ENCODE measurements at regions of chr13 and their contacts with region 1.

Region 1: DNA sequence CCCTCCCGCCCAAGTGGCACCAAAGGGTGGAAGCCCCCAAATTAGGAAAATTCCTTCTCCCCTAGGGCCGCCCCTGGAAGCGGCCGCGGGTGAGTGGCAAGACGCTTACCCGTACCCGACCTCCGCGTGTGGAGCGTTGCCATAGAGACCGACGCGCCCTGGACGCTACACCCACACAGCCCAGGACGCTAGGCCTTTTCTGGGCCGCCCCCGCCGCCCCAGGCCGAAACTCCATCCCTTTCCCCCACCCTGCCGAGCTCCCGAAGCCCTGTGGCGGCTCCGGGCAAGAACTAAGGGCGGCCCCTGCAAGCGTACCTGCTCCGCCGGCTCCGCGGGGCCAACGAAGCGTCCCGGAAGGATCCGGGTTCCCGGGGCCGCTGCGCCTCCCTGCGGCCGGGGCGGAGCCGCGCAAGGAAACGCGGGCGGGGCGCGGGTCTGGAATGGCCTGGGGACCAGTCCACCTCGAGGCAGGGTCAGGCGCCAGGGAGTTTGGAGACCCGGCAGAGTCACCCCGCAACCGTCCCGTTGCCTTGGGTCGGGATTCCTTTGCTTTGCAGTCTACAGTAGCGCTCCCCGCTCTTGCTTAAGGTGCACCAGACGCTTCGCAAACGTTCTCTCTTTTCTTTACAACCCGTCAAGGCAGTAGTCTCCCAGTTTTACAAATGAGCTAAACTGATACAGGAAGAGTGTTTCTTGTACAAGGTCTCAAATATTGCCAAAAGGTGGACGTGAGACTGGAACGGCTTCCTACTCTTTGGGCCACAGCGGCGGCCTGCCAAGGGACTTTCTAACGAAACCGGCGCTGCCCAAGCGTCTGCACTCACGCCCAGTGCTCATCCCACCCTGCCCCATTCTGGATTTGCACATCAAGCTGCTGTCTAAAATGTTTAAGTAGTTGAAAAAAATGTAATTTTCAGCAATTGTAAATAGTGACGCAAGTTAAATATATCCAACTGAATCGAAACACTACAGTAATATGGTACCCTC is at the start of gene NEK5:
- DNase-seq: peak; percentile 48 to 58 (median 55)
- H3K4me3 ChIP-seq: peak within 1 kb of the TSS; percentile 59 to 73
- H3K4me3 Mint-ChIP-seq: peak within 1 kb of the TSS; percentile 77 to 95 (median 86)
- H3K27ac ChIP-seq: no peak within 1 kb of the TSS
- H3K27ac Mint-ChIP-seq: peak within 1 kb of the TSS in 6 of 7 donors; percentile 3 to 50 (median 18)
- H3K4me1 ChIP-seq: peaks cover 19% of the 10 kb centered on the region
- H3K4me1 Mint-ChIP-seq: peaks cover 11 to 19% (median 13%) of the 10 kb centered on the region in 4 donors
- H3K27me3 ChIP-seq: peaks cover 4% of the 10 kb centered on the region
- H3K27me3 Mint-ChIP-seq: peaks cover 0 to 3% of the 10 kb centered on the region in 2 donors
- total RNA-seq, gene NEK5: not detected

Region 2: DNA sequence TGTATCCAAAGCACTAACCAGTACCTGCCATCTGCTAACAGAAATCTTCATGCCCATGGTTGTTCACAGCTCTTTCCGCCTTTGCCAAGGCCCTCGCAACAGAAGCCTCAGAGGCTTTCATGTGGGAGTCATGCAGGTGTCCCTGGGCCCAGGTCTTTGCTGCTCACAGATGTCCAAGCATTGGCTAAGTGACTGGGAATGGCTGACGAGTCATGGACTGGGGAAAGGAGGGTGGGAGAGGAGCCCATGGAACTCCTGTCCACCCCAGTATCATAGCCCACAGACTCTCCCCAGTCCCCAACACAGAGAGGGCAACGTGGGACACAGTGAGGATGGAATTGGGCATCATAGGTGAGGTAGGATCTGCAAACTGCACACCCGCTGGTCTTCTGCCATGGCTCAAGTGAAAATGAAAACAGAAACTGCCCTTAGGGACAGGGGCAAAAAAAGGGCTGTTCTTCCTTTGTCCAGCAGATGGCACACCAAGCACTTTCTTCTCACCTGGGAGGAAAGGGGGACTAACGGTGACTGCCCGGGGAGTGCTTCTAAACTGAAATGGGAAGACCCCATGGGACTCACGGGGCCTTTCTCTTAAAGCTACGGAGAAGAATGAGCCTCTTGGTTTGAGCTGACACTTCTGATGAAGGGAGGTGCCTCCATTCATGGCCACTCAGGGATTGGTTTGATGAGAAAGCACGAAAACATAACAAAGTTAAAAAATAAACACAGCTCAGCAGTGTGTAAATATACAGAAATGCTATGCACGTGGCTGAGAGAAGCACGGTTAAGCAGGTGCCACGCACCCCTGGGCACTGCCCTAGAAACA is 314.0 kb before region 1 on chr13:
- CTCF ChIA-PET with region 1: interaction called, 21 read pairs
- POLR2A ChIA-PET with region 1: interaction called, 3 read pairs
- intact Hi-C with region 1: loop called (anchors 1 kb)
- DNase-seq: peak; percentile 74 to 79 (median 77)
- H3K4me3 ChIP-seq: peak overlapping the region in 1 of 2 donors; percentile 12
- H3K4me3 Mint-ChIP-seq: peak overlapping the region; percentile 52 to 83 (median 70)
- H3K27ac ChIP-seq: peak overlapping the region; percentile 43
- H3K27ac Mint-ChIP-seq: peak overlapping the region; percentile 78 to 97 (median 90)
- H3K4me1 ChIP-seq: peaks cover 62% of the 10 kb centered on the region
- H3K4me1 Mint-ChIP-seq: peaks cover 47 to 85% (median 64%) of the 10 kb centered on the region in 4 donors
- H3K27me3 ChIP-seq: no peaks in the 10 kb centered on the region
- H3K27me3 Mint-ChIP-seq: no peaks in the 10 kb centered on the region

Region 3: GRCh38 chr13:51832471-51833152 is 296.4 kb before region 1 on chr13:
- CTCF ChIA-PET with region 1: interaction called, 6 read pairs
- POLR2A ChIA-PET with region 1: no interaction called
- intact Hi-C with region 1: loop called (anchors 5 kb)
- DNase-seq: peak; percentile 72 to 78 (median 73)
- H3K4me3 ChIP-seq: no peak overlapping the region
- H3K4me3 Mint-ChIP-seq: peak overlapping the region in 7 of 8 donors; percentile 6 to 67 (median 44)
- H3K27ac ChIP-seq: no peak overlapping the region
- H3K27ac Mint-ChIP-seq: peak overlapping the region; percentile 6 to 85 (median 66)
- H3K4me1 ChIP-seq: peaks cover 18% of the 10 kb centered on the region
- H3K4me1 Mint-ChIP-seq: peaks cover 16 to 43% (median 34%) of the 10 kb centered on the region in 4 donors
- H3K27me3 ChIP-seq: no peaks in the 10 kb centered on the region
- H3K27me3 Mint-ChIP-seq: no peaks in the 10 kb centered on the region

Region 4: GRCh38 chr13:51844862-51845573 is 284.0 kb before region 1 on chr13 and contains the start of gene TMEM272:
- CTCF ChIA-PET with region 1: interaction called, 26 read pairs
- POLR2A ChIA-PET with region 1: no interaction called
- intact Hi-C with region 1: loop called (anchors 1 kb)
- DNase-seq: peak in 4 of 5 donors; percentile 36 to 57 (median 48)
- H3K4me3 ChIP-seq: no peak within 1 kb of the TSS
- H3K4me3 Mint-ChIP-seq: peak within 1 kb of the TSS in 4 of 8 donors; percentile 9 to 70 (median 54)
- H3K27ac ChIP-seq: no peak within 1 kb of the TSS
- H3K27ac Mint-ChIP-seq: peak within 1 kb of the TSS in 2 of 7 donors; percentile 48 to 62
- H3K4me1 ChIP-seq: no peaks in the 10 kb centered on the region
- H3K4me1 Mint-ChIP-seq: peaks cover 4 to 10% (median 8%) of the 10 kb centered on the region in 4 donors
- H3K27me3 ChIP-seq: no peaks in the 10 kb centered on the region
- H3K27me3 Mint-ChIP-seq: peaks cover 2 to 3% of the 10 kb centered on the region in 2 donors
- total RNA-seq, gene TMEM272: 7.9 to 9.0 TPM

Region 5: GRCh38 chr13:51895906-51896888 is 232.8 kb before region 1 on chr13:
- CTCF ChIA-PET with region 1: interaction called, 59 read pairs
- POLR2A ChIA-PET with region 1: no interaction called
- intact Hi-C with region 1: loop called (anchors 1 kb)
- DNase-seq: peak in 4 of 5 donors; percentile 38 to 47 (median 42)
- H3K4me3 ChIP-seq: no peak overlapping the region
- H3K4me3 Mint-ChIP-seq: no peak overlapping the region
- H3K27ac ChIP-seq: no peak overlapping the region
- H3K27ac Mint-ChIP-seq: no peak overlapping the region
- H3K4me1 ChIP-seq: no peaks in the 10 kb centered on the region
- H3K4me1 Mint-ChIP-seq: peaks cover 0 to 4% (median 1%) of the 10 kb centered on the region in 4 donors
- H3K27me3 ChIP-seq: no peaks in the 10 kb centered on the region
- H3K27me3 Mint-ChIP-seq: peaks cover 1 to 17% of the 10 kb centered on the region in 2 donors

Region 6: DNA sequence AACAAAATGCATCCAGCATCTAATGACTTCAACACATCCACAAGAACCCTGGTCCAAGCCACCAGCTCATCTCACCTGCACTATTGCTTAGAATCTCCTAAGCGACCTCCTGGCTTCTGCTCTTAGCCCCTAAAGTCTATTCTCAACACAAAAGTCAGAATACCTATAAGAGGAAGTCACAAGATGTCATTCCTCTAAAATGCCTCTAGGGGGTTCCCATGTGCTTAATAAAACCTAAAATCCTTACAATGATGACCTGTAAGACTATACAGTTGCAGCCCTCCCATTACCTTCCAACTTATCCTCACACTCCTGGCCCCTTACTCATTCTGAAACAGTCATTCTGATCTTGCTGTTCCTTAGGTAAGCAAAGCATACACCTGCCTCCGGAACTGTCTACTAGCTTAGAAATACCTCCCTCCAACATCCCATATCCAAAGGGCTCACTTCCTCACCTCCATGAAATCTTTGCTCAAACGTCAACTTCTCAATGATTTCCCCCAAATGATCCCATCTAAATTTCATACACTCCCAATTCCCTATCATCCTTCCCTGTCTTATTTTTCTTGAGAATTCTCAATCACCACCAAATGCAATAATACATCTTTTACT is 127.8 kb before region 1 on chr13:
- CTCF ChIA-PET with region 1: interaction called, 49 read pairs
- POLR2A ChIA-PET with region 1: no interaction called
- intact Hi-C with region 1: loop called (anchors 1 kb)
- DNase-seq: peak in 4 of 5 donors; percentile 41 to 48 (median 43)
- H3K4me3 ChIP-seq: no peak overlapping the region
- H3K4me3 Mint-ChIP-seq: no peak overlapping the region
- H3K27ac ChIP-seq: no peak overlapping the region
- H3K27ac Mint-ChIP-seq: peak overlapping the region in 1 of 7 donors; percentile 56
- H3K4me1 ChIP-seq: no peaks in the 10 kb centered on the region
- H3K4me1 Mint-ChIP-seq: peaks cover 0 to 2% (median under 1%) of the 10 kb centered on the region in 4 donors
- H3K27me3 ChIP-seq: peaks cover 5% of the 10 kb centered on the region
- H3K27me3 Mint-ChIP-seq: peaks cover 4 to 7% of the 10 kb centered on the region in 2 donors

Region 7: GRCh38 chr13:52159321-52160086 is 30.5 kb after region 1 on chr13 and contains the start of gene NEK3:
- CTCF ChIA-PET with region 1: interaction called, 7 read pairs
- POLR2A ChIA-PET with region 1: interaction called, 7 read pairs
- intact Hi-C with region 1: loop called (anchors 2 kb)
- DNase-seq: peak; percentile 53 to 65 (median 59)
- H3K4me3 ChIP-seq: peak within 1 kb of the TSS; percentile 55 to 70
- H3K4me3 Mint-ChIP-seq: peak within 1 kb of the TSS; percentile 89 to 95 (median 93)
- H3K27ac ChIP-seq: peak within 1 kb of the TSS; percentile 40
- H3K27ac Mint-ChIP-seq: peak within 1 kb of the TSS; percentile 73 to 95 (median 86)
- H3K4me1 ChIP-seq: peaks cover 15% of the 10 kb centered on the region
- H3K4me1 Mint-ChIP-seq: peaks cover 27 to 46% (median 32%) of the 10 kb centered on the region in 4 donors
- H3K27me3 ChIP-seq: no peaks in the 10 kb centered on the region
- H3K27me3 Mint-ChIP-seq: no peaks in the 10 kb centered on the region
- total RNA-seq, gene NEK3: 6.4 to 8.2 TPM

Measured in CD4-positive, alpha-beta memory T cell (primary cell).